ENCODE measurements at regions of chr13 and their contacts with region 1.

Region 1: DNA sequence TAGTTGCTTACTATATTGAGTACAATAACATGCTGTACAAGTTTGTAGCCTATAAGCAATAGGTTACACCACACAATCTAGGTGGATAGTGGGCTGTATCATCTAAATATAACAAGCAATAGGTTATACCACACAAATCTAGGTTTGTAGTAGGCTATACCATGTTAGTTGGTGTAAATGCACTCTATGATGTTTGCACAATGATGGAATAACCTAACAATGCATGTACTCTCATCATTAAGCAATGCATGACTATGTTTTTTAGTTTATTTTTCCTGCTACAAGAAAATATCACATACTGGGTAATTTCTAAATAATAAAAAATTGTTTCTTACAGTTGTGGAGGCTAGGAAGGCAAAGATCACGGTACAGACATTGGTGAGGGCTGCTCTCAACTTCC is 262.5 kb downstream of the SLITRK6 start:
- DNase-seq: no peak
- ATAC-seq: no peak

Region 2: DNA sequence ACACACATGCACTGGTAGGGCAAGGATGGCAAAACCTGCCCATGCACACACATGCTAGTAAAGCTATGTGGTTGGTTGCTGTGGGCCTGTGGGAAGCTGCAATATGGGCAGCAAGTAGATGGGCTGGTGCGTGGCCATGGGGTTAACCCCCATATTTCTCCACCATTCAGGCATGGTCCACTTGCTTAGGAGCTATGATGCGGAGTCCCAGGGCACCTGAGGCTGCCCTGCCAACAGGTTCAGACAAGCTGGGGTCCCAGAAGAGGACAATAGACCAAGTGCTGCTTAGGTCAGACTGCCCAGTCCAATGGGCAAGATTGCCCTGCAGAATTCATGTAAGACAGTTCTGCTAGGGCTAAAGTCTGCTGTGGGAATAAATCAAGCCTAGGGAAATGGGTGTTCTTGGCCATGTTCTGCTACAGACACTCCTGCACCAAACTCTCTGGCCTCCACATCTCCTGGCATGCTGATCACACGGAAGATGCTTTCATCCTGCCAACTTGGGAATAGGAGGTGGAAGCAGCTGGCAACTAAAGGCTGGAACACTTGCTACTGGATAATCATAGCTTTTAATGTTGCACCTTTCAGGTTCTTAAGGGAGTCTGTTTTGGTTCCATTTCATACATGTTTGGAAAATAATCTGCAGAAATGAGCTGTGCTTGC is 1008.2 kb before region 1 on chr13:
- intact Hi-C with region 1: loop called (anchors 5 kb)
- DNase-seq: no peak
- ATAC-seq: peak; percentile 17

Region 3: GRCh38 chr13:85486663-85487062 is 50.0 kb before region 1 on chr13:
- intact Hi-C with region 1: no loop called
- DNase-seq: no peak
- ATAC-seq: no peak

Measured in sciatic nerve (tissue), 2 donors.